Esophagus squamous epithelium (tissue), 5 donors: ENCODE measurements at regions of chr13 and their contacts with region 1.

Region 1: GRCh38 chr13:77784515-77784914 is 87.0 kb downstream of the SLAIN1 start:
- DNase-seq: no peak
- H3K4me3 ChIP-seq: no peak overlapping the region
- H3K27ac ChIP-seq: no peak overlapping the region
- H3K4me1 ChIP-seq: peaks cover 0 to 8% (median 6%) of the 10 kb centered on the region in 3 donors
- H3K27me3 ChIP-seq: no peaks in the 10 kb centered on the region
- CTCF ChIP-seq: no peak
- POLR2A ChIP-seq: no peak

Region 2: GRCh38 chr13:77729502-77730221 is 54.9 kb before region 1 on chr13:
- intact Hi-C with region 1: no loop called
- DNase-seq: no peak
- H3K4me3 ChIP-seq: no peak overlapping the region
- H3K27ac ChIP-seq: no peak overlapping the region
- H3K4me1 ChIP-seq: no peaks in the 10 kb centered on the region
- H3K27me3 ChIP-seq: no peaks in the 10 kb centered on the region
- CTCF ChIP-seq: no peak
- POLR2A ChIP-seq: no peak

Region 3: GRCh38 chr13:78121459-78122348 is 337.2 kb after region 1 on chr13:
- intact Hi-C with region 1: loop called (anchors 2 kb)
- DNase-seq: no peak
- H3K4me3 ChIP-seq: no peak overlapping the region
- H3K27ac ChIP-seq: no peak overlapping the region
- H3K4me1 ChIP-seq: peaks cover 0 to 9% (median 0%) of the 10 kb centered on the region in 3 donors
- H3K27me3 ChIP-seq: peaks cover 0 to 18% (median 0%) of the 10 kb centered on the region in 4 donors
- CTCF ChIP-seq: peak; percentile 71 to 82 (median 79)
- POLR2A ChIP-seq: no peak

Region 4: GRCh38 chr13:78398743-78399410 is 614.4 kb after region 1 on chr13:
- intact Hi-C with region 1: no loop called
- DNase-seq: no peak
- H3K4me3 ChIP-seq: no peak overlapping the region
- H3K27ac ChIP-seq: no peak overlapping the region
- H3K4me1 ChIP-seq: no peaks in the 10 kb centered on the region
- H3K27me3 ChIP-seq: no peaks in the 10 kb centered on the region
- CTCF ChIP-seq: no peak
- POLR2A ChIP-seq: no peak